ENCODE measurements at regions of chr10 and their contacts with region 1.

Region 1: DNA sequence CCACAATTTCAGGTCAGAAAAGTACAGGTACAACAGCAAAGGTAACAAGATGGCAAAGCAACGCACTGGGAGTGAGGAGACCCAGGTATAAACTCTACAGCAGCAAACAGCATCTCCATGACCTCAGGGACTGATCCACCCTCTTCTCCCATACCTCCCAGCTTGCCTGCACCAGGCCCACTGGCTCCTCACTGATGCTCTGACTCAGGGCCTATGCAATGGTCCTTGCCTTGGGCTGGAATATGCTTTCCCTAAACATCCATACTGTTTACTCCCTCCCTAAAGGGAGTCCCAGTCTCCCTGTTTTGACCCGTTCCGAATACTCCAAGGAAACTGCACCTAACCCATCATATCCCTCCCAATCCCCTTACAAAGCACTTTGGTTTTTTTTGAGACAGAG is 60.4 kb downstream of the UPF2 start:
- DNase-seq: no peak
- H3K4me3 ChIP-seq: no peak overlapping the region
- H3K27ac ChIP-seq: no peak overlapping the region
- H3K4me1 ChIP-seq: no peaks in the 10 kb centered on the region
- H3K27me3 ChIP-seq: no peaks in the 10 kb centered on the region
- CTCF ChIP-seq: no peak

Region 2: GRCh38 chr10:11789306-11789705 is 192.9 kb before region 1 on chr10:
- intact Hi-C with region 1: loop called (anchors 5 kb)
- DNase-seq: no peak
- H3K4me3 ChIP-seq: no peak overlapping the region
- H3K27ac ChIP-seq: no peak overlapping the region
- H3K4me1 ChIP-seq: no peaks in the 10 kb centered on the region
- H3K27me3 ChIP-seq: no peaks in the 10 kb centered on the region
- CTCF ChIP-seq: no peak

Measured in colonic mucosa (tissue), 4 donors.